Activated naive CD8-positive, alpha-beta T cell treated with anti-CD3 and anti-CD28 coated beads, Interleukin-2, amount 10 ng/mL, durations not matched to agents 7 days and 5 days (primary cell): ENCODE measurements at regions of chr1 and their contacts with region 1.

Region 1: GRCh38 chr1:84573967-84574842 is at the start of gene CTBS:
- DNase-seq: peak; percentile 88
- ATAC-seq: peak; percentile 89
- H3K4me3 Mint-ChIP-seq: peak within 1 kb of the TSS; percentile 97
- H3K27ac Mint-ChIP-seq: peak within 1 kb of the TSS; percentile 100
- H3K4me1 Mint-ChIP-seq: peaks cover 29% of the 10 kb centered on the region
- H3K27me3 Mint-ChIP-seq: no peaks in the 10 kb centered on the region
- total RNA-seq, gene CTBS: 17.0 to 17.3 TPM

Region 2: DNA sequence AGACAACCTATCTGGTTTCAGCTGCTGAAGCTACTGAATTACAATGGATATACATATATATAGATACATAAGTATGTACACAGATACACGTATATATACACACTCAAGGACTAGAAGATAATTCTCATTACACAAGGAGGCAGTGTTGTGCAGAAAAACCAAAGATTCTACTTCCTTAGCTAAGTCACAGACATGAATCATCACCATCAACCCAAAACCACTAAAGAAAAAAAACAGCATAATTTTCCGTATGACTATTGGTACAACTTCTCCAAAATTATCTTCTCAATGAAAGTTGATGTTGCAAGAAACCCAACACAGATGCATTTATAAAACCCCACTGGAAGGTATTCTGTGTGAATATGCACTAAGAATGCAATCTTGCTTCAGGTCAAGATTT is 131.9 kb before region 1 on chr1:
- POLR2A ChIA-PET with region 1: interaction called, 17 read pairs
- DNase-seq: no peak
- ATAC-seq: peak; percentile 95
- H3K4me3 Mint-ChIP-seq: peak overlapping the region; percentile 45
- H3K27ac Mint-ChIP-seq: peak overlapping the region; percentile 44
- H3K4me1 Mint-ChIP-seq: peaks cover 12% of the 10 kb centered on the region
- H3K27me3 Mint-ChIP-seq: peaks cover 7% of the 10 kb centered on the region

Region 3: DNA sequence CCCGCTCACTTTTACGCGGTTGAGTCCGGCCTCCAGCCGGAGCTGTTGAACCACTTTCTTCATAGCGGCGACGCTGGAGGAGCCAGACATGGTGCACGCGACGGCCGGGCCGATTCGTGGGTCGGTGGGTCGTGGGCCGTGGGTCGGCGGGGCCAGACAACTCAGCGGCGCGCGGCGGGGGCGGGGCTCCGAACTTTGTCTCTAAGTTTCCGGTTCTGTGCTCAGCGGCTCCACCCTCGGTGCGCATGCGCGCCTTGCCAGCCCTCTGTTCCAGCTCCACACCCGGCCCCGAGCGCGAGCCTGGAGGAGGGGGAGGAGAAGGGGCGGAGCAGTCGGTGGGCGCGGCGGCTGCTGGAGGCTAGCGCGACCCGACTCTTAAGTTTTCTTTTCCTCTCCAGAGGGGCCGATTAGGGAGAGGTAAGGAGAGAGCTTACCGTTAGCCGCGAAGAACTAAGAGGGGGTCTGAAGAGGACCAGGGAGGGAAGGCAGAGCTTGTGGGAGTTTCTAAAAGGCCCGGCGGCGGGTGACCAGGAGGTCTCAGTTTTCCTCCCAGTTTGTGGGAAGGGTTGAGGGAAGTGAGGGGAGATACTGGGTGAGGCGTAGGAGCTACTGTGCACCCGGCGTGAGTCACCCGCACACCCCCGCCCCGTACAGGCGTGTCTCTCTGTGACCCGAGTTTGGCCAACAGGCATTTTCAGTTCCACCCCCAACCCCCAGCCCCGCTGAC is 68.0 kb before region 1 on chr1 and contains the starts of genes GNG5 and SPATA1:
- POLR2A ChIA-PET with region 1: interaction called, 84 read pairs
- DNase-seq: peak; percentile 99
- ATAC-seq: peak; percentile 91
- H3K4me3 Mint-ChIP-seq: peak within 1 kb of the TSS; percentile 99
- H3K27ac Mint-ChIP-seq: peak within 1 kb of the TSS; percentile 100
- H3K4me1 Mint-ChIP-seq: peaks cover 22% of the 10 kb centered on the region
- H3K27me3 Mint-ChIP-seq: no peaks in the 10 kb centered on the region
- total RNA-seq, gene GNG5: 88.0 to 88.4 TPM
- total RNA-seq, gene SPATA1: 3.3 to 4.0 TPM

Region 4: DNA sequence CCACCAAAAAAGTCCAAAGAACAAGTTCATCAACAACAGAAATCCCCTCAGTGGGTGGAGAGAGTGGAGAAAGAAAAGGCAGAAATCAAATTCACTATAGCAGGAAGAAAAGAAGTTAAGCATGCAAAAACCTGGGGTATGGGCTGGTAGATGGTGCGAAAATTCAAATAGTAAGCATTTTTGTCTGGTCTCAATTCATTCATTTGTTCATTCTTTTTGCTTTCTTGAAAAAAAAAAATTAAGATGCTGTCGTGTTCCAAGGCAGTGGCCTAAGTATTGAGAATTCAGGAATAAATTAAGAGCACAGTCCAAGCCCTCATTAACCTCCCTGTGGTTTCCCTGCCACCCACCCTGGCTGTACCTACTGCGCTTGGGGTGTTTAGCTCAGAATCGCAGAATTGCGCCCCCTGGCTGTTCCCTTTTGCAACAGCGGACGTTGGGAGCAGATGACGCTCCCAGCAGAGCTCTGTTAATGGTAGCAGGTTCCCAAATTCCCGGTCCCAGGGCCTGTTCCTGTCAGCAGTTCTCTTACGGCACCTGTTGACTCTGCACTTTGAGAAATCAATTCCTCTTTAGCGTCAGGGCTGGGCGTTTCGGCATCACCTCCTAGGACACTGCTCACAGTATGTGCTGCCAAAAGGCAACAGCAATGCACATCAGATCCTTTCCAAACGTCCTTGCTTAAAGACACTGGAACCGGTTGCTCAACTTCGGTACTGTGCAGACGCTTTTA is 150.1 kb after region 1 on chr1:
- POLR2A ChIA-PET with region 1: no interaction called
- DNase-seq: peak; percentile 45
- ATAC-seq: no peak
- H3K4me3 Mint-ChIP-seq: no peak overlapping the region
- H3K27ac Mint-ChIP-seq: no peak overlapping the region
- H3K4me1 Mint-ChIP-seq: peaks cover 2% of the 10 kb centered on the region
- H3K27me3 Mint-ChIP-seq: peaks cover 20% of the 10 kb centered on the region